Activated CD4-positive, alpha-beta memory T cell treated with anti-CD3 and anti-CD28 coated beads, Interleukin-2, amount 10 ng/mL, durations not matched to agents 7 days and 5 days (primary cell): ENCODE measurements at regions of chr6 and their contacts with region 1.

Region 1: DNA sequence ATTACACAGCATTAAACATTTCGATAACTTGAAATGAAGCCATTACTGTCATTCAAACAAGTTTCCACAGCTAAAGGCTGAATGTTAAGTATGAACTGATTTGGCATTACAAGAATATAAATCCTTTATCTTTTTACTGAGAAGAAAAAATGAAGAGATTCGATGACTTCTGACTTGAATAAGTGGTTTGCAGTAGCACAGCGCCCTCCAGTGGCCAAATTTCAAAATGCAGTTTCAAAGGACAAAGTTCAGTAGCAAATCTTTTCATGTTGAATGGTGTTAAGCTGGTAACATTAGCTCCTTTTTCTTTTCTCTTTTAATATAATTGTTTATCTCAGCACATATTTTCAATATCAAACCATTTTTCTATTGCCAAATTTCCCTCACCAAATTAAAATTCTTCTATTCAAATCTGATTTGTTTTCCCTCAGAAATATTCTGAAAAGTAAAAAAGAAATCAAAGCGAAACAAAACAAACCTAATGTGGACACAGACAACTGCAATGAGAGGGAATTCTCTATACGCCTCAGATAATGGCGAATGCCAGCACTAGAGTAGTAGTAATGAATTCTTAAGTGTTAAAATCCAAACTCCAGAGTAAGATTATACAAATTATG is 145.7 kb downstream of the BTBD9 start:
- DNase-seq: peak; percentile 81
- H3K4me3 Mint-ChIP-seq: no peak overlapping the region
- H3K27ac Mint-ChIP-seq: no peak overlapping the region
- H3K4me1 Mint-ChIP-seq: peaks cover 14% of the 10 kb centered on the region
- H3K27me3 Mint-ChIP-seq: no peaks in the 10 kb centered on the region

Region 2: DNA sequence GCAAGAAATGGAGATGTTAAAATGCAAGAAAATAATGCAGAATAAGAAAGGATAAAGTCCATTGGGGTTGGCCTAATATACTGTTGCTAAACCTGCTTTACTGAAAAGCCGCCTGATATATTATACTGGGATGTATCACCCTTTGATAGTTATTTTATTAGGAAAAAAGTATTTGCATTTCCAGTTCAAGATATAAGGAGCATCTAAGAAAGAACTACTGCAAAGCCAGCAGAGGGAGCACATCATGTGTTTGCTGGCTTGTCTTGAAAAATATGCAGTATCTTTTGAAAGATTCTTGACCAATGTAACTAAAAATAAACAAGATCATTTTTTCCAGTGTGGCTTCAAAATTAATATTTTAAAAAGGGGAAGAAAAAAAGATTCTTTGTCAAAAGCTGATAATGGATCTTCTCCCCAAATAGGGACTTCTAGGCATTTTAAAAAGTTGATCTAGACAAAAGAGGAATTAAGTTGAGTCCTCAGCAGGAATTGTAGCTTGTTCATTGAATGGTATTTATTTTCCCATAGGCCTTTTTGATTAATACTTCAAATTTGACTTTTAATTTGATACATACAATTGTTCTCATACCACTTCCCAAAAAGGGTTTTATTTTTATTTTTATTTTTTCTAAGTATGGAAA is 459.6 kb before region 1 on chr6:
- CTCF ChIA-PET with region 1: interaction called, 21 read pairs
- POLR2A ChIA-PET with region 1: no interaction called
- DNase-seq: no peak
- H3K4me3 Mint-ChIP-seq: no peak overlapping the region
- H3K27ac Mint-ChIP-seq: no peak overlapping the region
- H3K4me1 Mint-ChIP-seq: peaks cover 17% of the 10 kb centered on the region
- H3K27me3 Mint-ChIP-seq: no peaks in the 10 kb centered on the region

Region 3: GRCh38 chr6:38467566-38467965 is 26.5 kb before region 1 on chr6:
- CTCF ChIA-PET with region 1: no interaction called
- POLR2A ChIA-PET with region 1: no interaction called
- DNase-seq: no peak
- H3K4me3 Mint-ChIP-seq: no peak overlapping the region
- H3K27ac Mint-ChIP-seq: no peak overlapping the region
- H3K4me1 Mint-ChIP-seq: no peaks in the 10 kb centered on the region
- H3K27me3 Mint-ChIP-seq: no peaks in the 10 kb centered on the region

Region 4: DNA sequence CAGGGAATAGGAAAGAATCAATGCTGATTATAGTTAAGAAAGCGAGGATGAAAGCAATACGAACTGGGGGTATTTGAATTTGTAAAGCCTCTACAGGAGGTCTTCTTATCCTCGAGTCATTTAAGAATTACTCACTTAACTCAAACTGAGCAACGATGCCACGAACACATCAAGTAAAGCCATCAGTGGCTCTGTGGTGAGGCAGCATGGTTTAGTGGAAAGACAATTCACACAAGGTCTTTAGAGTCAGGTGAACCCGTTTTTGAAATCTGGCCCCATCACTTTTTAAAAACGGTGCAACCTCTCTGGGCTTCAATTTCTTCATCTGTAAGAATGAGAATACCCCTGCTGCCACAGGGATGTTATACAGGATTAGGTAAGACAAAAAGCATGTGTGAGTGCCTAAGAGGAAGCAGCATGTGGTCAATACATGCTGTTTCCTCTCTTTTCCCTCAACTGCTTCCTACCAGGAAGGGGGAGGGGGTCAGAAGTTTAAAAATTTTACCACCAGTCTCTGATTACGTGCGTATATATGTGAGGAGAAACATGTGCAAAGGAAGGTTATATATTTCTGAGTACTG is 16.3 kb before region 1 on chr6:
- CTCF ChIA-PET with region 1: interaction called, 17 read pairs
- POLR2A ChIA-PET with region 1: no interaction called
- DNase-seq: no peak
- H3K4me3 Mint-ChIP-seq: no peak overlapping the region
- H3K27ac Mint-ChIP-seq: no peak overlapping the region
- H3K4me1 Mint-ChIP-seq: peaks cover 3% of the 10 kb centered on the region
- H3K27me3 Mint-ChIP-seq: no peaks in the 10 kb centered on the region

Region 5: GRCh38 chr6:38483526-38483925 is 10.5 kb before region 1 on chr6:
- CTCF ChIA-PET with region 1: interaction called, 17 read pairs
- POLR2A ChIA-PET with region 1: interaction called, 3 read pairs
- DNase-seq: no peak
- H3K4me3 Mint-ChIP-seq: no peak overlapping the region
- H3K27ac Mint-ChIP-seq: no peak overlapping the region
- H3K4me1 Mint-ChIP-seq: peaks cover 3% of the 10 kb centered on the region
- H3K27me3 Mint-ChIP-seq: no peaks in the 10 kb centered on the region